ENCODE measurements at regions of chr11 and their contacts with region 1.

Region 1: DNA sequence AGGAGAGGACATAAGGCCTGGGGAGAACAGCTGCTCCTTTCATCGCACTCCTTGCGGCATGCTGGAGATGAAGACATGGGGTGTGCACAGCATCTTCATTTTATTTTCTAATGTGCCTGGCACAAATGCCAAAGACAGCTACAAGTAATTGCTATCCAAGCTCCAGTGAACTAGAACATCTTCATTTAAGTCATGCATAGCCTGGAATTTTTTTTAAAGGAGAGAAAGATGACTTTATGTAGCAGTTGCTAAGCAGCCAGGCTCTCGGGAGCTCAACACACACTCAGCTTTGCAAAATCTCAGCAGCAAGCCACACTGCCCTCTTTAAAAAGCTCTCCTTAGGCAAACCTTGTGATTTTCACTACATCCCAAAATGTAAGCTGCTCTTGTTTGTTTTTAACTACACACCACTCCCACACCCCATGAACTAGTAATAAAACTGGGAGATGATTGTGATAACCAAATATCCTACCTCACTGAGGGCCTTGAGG is 164.5 kb upstream of the POU2AF2 start:
- DNase-seq: no peak
- ATAC-seq: no peak
- H3K4me3 ChIP-seq: no peak overlapping the region
- H3K27ac ChIP-seq: no peak overlapping the region
- H3K4me1 ChIP-seq: no peaks in the 10 kb centered on the region
- H3K27me3 ChIP-seq: no peaks in the 10 kb centered on the region
- CTCF ChIP-seq: no peak

Region 2: DNA sequence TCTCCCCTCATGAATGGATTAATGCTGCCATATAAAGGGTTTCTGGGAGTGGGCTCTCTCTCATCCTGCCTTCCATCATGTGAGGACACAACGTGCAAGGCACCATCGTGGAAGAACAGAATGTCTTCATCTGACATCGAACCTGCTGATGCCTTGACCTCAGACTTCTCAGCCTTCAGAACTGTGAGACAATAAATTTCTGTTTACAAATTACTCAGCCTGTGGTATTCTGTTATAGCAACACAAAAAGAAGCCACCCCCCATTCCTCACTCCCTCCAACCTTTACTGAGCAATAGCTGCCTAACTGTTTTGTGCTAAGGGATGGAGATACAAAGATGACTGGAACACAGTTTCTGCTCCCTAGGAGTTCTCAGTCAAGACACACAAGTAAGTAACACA is 1285.7 kb after region 1 on chr11:
- CTCF ChIA-PET with region 1: no interaction called
- POLR2A ChIA-PET with region 1: interaction called, 16 read pairs
- in situ Hi-C with region 1: no loop called
- intact Hi-C with region 1: no loop called
- DNase-seq: no peak
- ATAC-seq: no peak
- H3K4me3 ChIP-seq: no peak overlapping the region
- H3K27ac ChIP-seq: no peak overlapping the region
- H3K4me1 ChIP-seq: peaks cover 11% of the 10 kb centered on the region; the same call in 1 of the 2 replicates
- H3K27me3 ChIP-seq: no peaks in the 10 kb centered on the region
- CTCF ChIP-seq: no peak